ENCODE measurements at regions of chr4 and their contacts with region 1.

Region 1: GRCh38 chr4:7753271-7753670 is 186.4 kb downstream of the AFAP1 start:
- DNase-seq: peak; percentile 94
- H3K4me3 ChIP-seq: no peak overlapping the region
- H3K27ac ChIP-seq: peak overlapping the region; percentile 49
- H3K4me1 ChIP-seq: peaks cover 12% of the 10 kb centered on the region
- H3K27me3 ChIP-seq: no peaks in the 10 kb centered on the region
- CTCF ChIP-seq: no peak

Region 2: DNA sequence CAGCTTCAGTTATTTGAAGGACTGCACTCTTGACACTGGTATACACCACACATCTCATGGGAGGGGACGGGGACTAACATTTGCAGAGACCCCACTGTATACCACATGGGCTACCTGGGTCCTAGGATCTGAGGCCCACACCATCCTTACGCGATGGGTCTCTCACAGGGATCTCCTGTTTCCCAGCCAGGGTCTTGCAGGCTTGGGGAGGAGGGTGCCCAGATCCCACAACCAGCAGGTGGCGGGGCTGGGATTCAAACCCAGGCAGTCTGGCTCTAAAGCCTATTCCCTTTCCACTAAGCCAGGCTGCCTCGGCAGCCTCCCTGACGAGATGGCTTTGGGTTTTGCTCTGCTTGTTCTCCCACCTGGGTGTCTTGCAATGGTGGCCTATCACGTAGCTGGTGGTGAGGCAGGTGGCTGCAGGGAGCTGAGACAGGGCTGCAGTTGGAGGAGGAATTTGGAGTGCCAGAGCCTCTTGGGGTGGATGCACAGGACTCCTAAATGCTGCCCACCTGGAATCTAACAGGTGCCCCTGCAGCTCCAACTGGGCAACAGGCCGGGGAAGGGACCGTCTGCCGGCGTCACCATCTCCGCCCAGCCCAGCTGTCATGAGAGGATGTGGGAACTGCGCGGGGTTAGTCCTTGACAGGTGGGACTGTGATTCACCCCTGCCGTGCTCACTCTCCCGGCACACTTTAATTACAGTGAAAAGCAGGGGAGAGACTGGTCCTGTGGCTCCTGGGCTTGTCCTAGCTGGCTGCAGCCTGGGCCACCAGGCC is 429.2 kb before region 1 on chr4:
- CTCF ChIA-PET with region 1: no interaction called
- dilution Hi-C with region 1: loop called (anchors 5 kb)
- in situ Hi-C with region 1: no loop called
- intact Hi-C with region 1: no loop called
- DNase-seq: peak; percentile 25
- H3K4me3 ChIP-seq: no peak overlapping the region
- H3K27ac ChIP-seq: no peak overlapping the region
- H3K4me1 ChIP-seq: peaks cover 6% of the 10 kb centered on the region
- H3K27me3 ChIP-seq: peaks cover 2% of the 10 kb centered on the region
- CTCF ChIP-seq: peak in 1 of 2 donors; percentile 32

Region 3: DNA sequence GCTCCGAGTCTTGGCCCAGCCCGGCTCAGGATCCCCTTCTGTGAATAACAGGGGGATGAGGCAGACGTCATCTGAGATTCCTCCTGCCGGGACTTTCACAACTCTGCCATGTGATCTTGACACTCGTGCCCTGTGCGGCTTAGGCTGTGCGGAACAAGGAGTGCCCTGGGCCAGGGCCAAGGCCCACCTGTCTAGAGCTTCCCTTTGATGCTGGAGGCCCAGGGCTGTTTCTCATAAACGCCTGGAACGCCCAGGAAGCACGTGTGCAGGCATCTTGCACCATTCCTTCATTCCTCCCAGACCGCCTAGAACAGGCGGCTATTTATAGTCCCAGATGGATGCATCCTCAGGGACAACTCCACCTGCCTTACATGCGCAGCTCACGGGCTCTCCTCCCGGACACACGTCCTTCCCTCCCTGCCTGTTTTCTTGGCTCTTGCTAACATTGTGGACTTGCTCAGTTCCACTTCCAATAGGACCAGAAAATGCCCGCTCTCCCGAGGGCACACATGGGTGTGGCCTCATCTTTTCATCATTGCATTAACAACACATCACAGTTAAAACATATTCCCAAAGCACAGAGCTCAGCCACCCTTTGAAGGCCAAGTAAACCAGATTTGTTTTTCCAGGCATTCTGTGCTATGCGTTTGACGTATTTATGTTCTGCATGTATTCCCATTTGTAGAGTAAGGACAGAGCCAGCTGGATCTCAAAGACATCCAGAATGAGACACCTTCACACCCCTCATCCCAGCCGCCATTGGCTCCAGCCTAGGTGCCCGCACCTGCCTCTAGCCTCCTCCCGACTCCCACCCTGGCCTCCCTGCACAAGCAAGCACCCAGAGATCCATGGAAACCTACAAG is 348.2 kb after region 1 on chr4:
- CTCF ChIA-PET with region 1: no interaction called
- dilution Hi-C with region 1: loop called (anchors 5 kb)
- in situ Hi-C with region 1: no loop called
- intact Hi-C with region 1: no loop called
- DNase-seq: peak; percentile 23
- H3K4me3 ChIP-seq: no peak overlapping the region
- H3K27ac ChIP-seq: no peak overlapping the region
- H3K4me1 ChIP-seq: peaks cover 9% of the 10 kb centered on the region
- H3K27me3 ChIP-seq: no peaks in the 10 kb centered on the region
- CTCF ChIP-seq: no peak

Measured in mammary epithelial cell (primary cell).